Activated B cell treated with CpG ODN at 0.5 μM for 24 hours (primary cell): ENCODE measurements at regions of chr4 and their contacts with region 1.

Region 1: DNA sequence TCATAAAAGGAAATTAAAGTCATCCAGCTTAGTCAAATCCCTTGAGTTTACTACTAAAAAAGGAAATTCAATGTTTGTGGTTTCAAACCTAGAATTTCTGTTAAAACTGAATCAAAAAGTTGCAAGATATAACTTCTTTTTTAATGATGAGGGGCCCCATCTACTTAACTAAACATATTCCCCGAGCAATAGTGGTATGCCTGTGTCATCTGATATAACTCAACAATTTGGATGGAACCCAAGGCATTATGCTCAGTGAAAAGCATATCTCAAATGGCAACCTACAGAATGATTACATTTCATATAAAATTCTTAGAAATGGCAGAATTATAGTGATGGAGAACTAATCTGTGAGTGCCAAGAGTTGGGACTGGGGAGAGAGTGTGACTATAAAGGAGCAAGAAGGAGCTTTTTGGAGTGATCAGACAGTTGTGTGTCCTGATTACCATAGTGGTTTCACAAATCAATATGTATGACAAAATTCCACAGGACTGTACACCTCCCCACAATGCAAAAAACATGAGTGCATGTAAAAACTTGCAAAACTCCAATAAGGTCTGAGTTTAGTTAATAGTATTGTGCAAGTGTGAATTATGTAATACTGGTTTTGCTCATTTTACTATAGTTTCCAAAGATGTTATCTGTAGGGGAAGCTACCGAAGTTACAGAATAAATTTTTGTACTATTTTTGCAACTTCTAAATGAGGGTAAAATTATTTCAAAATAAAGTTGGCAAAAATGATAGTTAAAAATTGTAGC is 323.2 kb downstream of the ARHGAP24 start:
- DNase-seq: no peak
- ATAC-seq: no peak
- H3K4me3 Mint-ChIP-seq: no peak overlapping the region
- H3K27ac Mint-ChIP-seq: no peak overlapping the region
- H3K4me1 Mint-ChIP-seq: peaks cover 16% of the 10 kb centered on the region
- H3K27me3 Mint-ChIP-seq: no peaks in the 10 kb centered on the region
- CTCF ChIP-seq: no peak

Region 2: GRCh38 chr4:85756938-85757337 is 41.3 kb before region 1 on chr4:
- CTCF ChIA-PET with region 1: interaction called, 12 read pairs
- POLR2A ChIA-PET with region 1: no interaction called
- intact Hi-C with region 1: loop called (anchors 1 kb)
- DNase-seq: no peak
- ATAC-seq: peak; percentile 31
- H3K4me3 Mint-ChIP-seq: no peak overlapping the region
- H3K27ac Mint-ChIP-seq: no peak overlapping the region
- H3K4me1 Mint-ChIP-seq: peaks cover 14% of the 10 kb centered on the region
- H3K27me3 Mint-ChIP-seq: no peaks in the 10 kb centered on the region
- CTCF ChIP-seq: no peak